GM12878 (cell line): ENCODE measurements at regions of chr19 and their contacts with region 1.

Region 1: GRCh38 chr19:39546599-39546998 is 6.6 kb upstream of the EID2 start:
- DNase-seq: no peak
- ATAC-seq: no peak
- H3K4me3 ChIP-seq: no peak overlapping the region
- H3K27ac ChIP-seq: no peak overlapping the region
- H3K4me1 ChIP-seq: peaks cover 1% of the 10 kb centered on the region
- H3K27me3 ChIP-seq: no peaks in the 10 kb centered on the region; a peak in 1 of 4 replicates
- CTCF ChIP-seq: no peak
- EP300 ChIP-seq: no peak
- POLR2A ChIP-seq: no peak
- RAD21 ChIP-seq: no peak

Region 2: GRCh38 chr19:38880882-38881609 is 665.6 kb before region 1 on chr19:
- CTCF ChIA-PET with region 1: no interaction called
- POLR2A ChIA-PET with region 1: no interaction called
- RAD21 ChIA-PET with region 1: no interaction called
- SMC1A ChIA-PET with region 1: no interaction called
- in situ Hi-C with region 1: no loop called
- intact Hi-C with region 1: no loop called
- DNase-seq: no peak
- ATAC-seq: no peak
- H3K4me3 ChIP-seq: no peak overlapping the region
- H3K27ac ChIP-seq: no peak overlapping the region
- H3K4me1 ChIP-seq: peaks cover 7% of the 10 kb centered on the region
- H3K27me3 ChIP-seq: no peaks in the 10 kb centered on the region
- CTCF ChIP-seq: no peak
- EP300 ChIP-seq: no peak
- POLR2A ChIP-seq: no peak
- RAD21 ChIP-seq: no peak

Region 3: GRCh38 chr19:39631178-39631577 is 84.6 kb after region 1 on chr19:
- CTCF ChIA-PET with region 1: interaction called, 16 read pairs
- POLR2A ChIA-PET with region 1: no interaction called
- RAD21 ChIA-PET with region 1: interaction called, 7 read pairs
- SMC1A ChIA-PET with region 1: interaction called, 8 read pairs
- in situ Hi-C with region 1: no loop called
- intact Hi-C with region 1: loop called (anchors 2 kb)
- DNase-seq: no peak
- ATAC-seq: no peak
- H3K4me3 ChIP-seq: no peak overlapping the region
- H3K27ac ChIP-seq: no peak overlapping the region
- H3K4me1 ChIP-seq: no peaks in the 10 kb centered on the region
- H3K27me3 ChIP-seq: no peaks in the 10 kb centered on the region; a peak in 1 of 4 replicates
- CTCF ChIP-seq: no peak
- EP300 ChIP-seq: no peak
- POLR2A ChIP-seq: no peak
- RAD21 ChIP-seq: no peak

Region 4: DNA sequence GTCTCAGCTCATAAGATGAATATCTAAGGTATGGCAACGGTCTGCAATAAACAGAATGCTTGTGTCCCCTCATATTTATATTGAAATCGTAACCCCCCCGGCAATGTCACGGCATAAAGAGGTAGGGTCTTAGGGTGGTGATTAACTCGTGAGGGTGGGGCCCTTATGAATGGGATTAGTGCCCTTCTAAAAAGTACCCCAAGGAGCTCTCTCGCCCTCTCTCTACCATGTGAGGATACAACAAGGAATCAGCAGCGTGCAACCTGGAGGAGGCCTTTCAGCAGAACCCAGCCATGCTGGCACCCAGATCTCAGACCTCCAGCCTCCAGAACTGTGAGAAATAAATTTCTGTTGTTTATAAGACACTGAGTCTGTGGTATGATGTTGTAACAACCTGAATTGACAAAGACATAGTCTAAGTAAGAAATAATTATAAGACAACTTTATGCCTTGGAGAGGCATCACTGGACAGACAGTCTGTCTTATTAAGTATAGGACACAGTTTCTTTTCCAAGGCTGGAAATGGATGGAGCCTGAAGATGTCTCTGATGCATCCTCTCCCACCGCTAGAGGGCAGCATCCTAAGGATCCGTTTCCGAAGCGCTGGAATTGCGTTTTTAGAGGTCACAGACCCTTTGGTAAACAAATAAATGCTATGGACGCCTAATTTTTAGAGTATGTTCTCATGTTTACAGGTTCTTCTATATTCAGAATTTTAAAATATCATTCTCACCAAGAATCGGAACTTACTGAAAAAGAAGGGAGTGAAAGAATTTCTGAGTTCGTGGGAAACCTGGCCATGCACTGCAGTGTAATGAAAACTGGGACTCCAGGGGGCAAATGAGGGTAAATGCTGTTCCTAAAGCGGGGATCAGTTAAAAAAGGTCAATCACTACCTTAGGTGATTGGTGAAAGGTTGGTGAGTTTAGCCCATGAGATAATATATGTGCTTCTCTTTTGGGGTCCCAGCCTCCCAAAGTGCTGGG is 218.8 kb after region 1 on chr19:
- CTCF ChIA-PET with region 1: interaction called, 5 read pairs
- POLR2A ChIA-PET with region 1: no interaction called
- RAD21 ChIA-PET with region 1: no interaction called
- SMC1A ChIA-PET with region 1: interaction called, 6 read pairs
- in situ Hi-C with region 1: no loop called
- intact Hi-C with region 1: loop called (anchors 2 kb)
- DNase-seq: no peak
- ATAC-seq: no peak
- H3K4me3 ChIP-seq: no peak overlapping the region
- H3K27ac ChIP-seq: no peak overlapping the region
- H3K4me1 ChIP-seq: peaks cover 5% of the 10 kb centered on the region
- H3K27me3 ChIP-seq: no peaks in the 10 kb centered on the region
- CTCF ChIP-seq: peak; percentile 29 to 79 (median 56); a peak in 5 of 6 replicates
- EP300 ChIP-seq: no peak
- POLR2A ChIP-seq: no peak
- RAD21 ChIP-seq: 0 out of 2 replicates have a peak, but pooled peaks have one; percentile 22